T-cell (primary cell): ENCODE measurements at regions of chr13 and their contacts with region 1.

Region 1: DNA sequence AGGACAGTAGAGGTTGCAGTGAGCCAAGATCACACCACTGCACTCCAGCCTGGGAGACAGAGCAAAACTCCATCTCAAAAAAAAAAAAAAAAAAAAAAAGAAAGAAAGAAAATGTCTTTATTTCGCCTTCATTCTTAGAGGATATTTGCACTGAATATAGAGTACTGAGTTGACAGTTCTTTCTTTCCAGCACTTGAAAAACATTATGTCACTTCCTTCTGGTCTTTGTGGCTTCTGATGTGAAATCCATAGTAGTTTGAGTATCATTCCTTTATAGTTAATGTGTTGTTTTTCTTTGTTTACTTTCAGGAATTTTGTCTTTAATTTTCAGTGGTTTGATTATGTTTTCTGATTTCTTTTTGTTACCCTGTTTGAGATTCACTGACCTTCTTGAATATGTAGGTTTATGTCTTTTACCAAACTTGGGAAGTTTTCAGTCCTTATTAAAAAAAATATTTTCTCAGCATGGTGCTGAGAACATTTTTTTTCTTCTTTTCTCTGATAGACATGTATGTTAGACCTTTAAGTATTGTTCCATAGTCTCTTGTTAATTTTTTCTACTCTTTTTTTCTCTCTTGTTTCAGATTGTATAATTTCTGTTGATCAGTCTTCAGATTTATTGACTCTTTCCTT is 50.1 kb downstream of the PCCA start:
- DNase-seq: no peak
- ATAC-seq: no peak
- H3K4me3 ChIP-seq: no peak overlapping the region
- H3K4me3 Mint-ChIP-seq: no peak overlapping the region
- H3K27ac ChIP-seq: no peak overlapping the region
- H3K27ac Mint-ChIP-seq: no peak overlapping the region
- H3K4me1 ChIP-seq: no peaks in the 10 kb centered on the region
- H3K4me1 Mint-ChIP-seq: peaks cover 7 to 8% (median 7%) of the 10 kb centered on the region in 3 donors
- H3K27me3 ChIP-seq: no peaks in the 10 kb centered on the region
- H3K27me3 Mint-ChIP-seq: no peaks in the 10 kb centered on the region

Region 2: GRCh38 chr13:100156788-100157187 is 17.8 kb after region 1 on chr13:
- CTCF ChIA-PET with region 1: no interaction called
- POLR2A ChIA-PET with region 1: no interaction called
- DNase-seq: no peak
- ATAC-seq: no peak
- H3K4me3 ChIP-seq: no peak overlapping the region
- H3K4me3 Mint-ChIP-seq: no peak overlapping the region
- H3K27ac ChIP-seq: no peak overlapping the region
- H3K27ac Mint-ChIP-seq: no peak overlapping the region
- H3K4me1 ChIP-seq: no peaks in the 10 kb centered on the region
- H3K4me1 Mint-ChIP-seq: peaks cover 0 to 4% (median 2%) of the 10 kb centered on the region in 3 donors
- H3K27me3 ChIP-seq: no peaks in the 10 kb centered on the region
- H3K27me3 Mint-ChIP-seq: no peaks in the 10 kb centered on the region

Region 3: GRCh38 chr13:100323937-100324336 is 185.0 kb after region 1 on chr13:
- CTCF ChIA-PET with region 1: no interaction called
- POLR2A ChIA-PET with region 1: interaction called in 1 of 2 experiments, 10 read pairs
- DNase-seq: no peak
- ATAC-seq: no peak
- H3K4me3 ChIP-seq: no peak overlapping the region
- H3K4me3 Mint-ChIP-seq: no peak overlapping the region
- H3K27ac ChIP-seq: no peak overlapping the region
- H3K27ac Mint-ChIP-seq: no peak overlapping the region
- H3K4me1 ChIP-seq: no peaks in the 10 kb centered on the region
- H3K4me1 Mint-ChIP-seq: no peaks in the 10 kb centered on the region
- H3K27me3 ChIP-seq: no peaks in the 10 kb centered on the region
- H3K27me3 Mint-ChIP-seq: no peaks in the 10 kb centered on the region

Region 4: DNA sequence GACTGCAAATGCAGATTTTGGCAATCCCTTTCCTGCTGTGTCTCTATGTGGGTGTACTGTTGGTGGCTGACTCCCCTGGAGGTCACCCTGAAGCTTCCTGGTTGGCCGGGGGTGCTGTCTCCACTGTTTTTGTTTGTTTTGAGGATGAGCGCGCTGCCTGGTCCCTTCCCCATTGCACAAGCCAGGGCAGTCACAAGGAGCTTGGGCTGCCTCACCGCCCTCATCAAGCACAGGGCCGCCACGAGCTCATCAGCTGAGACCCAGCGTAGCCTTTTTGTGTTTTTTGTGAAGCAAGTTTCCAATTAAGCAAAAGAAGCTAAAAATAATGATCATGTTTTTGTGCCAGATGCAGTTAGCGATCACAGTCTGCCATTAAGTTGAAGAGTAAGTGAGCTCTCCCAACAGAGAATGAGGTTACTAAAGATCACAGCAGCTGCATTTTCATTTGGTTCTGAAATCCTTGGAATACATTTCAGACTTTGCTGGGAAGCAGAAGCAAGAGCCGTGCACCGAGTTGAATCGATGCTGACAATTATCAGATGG is 391.8 kb after region 1 on chr13:
- CTCF ChIA-PET with region 1: no interaction called
- POLR2A ChIA-PET with region 1: no interaction called
- DNase-seq: no peak
- ATAC-seq: no peak
- H3K4me3 ChIP-seq: no peak overlapping the region
- H3K4me3 Mint-ChIP-seq: no peak overlapping the region
- H3K27ac ChIP-seq: no peak overlapping the region
- H3K27ac Mint-ChIP-seq: no peak overlapping the region
- H3K4me1 ChIP-seq: no peaks in the 10 kb centered on the region
- H3K4me1 Mint-ChIP-seq: no peaks in the 10 kb centered on the region
- H3K27me3 ChIP-seq: no peaks in the 10 kb centered on the region
- H3K27me3 Mint-ChIP-seq: no peaks in the 10 kb centered on the region